Aorta (tissue), 5 donors: ENCODE measurements at regions of chr2 and their contacts with region 1.

Region 1: GRCh38 chr2:98909317-98910211 is 26.5 kb downstream of the CRACDL start:
- DNase-seq: peak in 1 of 2 donors; percentile 67
- ATAC-seq: peak; percentile 56
- H3K4me3 ChIP-seq: no peak overlapping the region
- H3K27ac ChIP-seq: peak overlapping the region in 1 of 2 donors; percentile 5
- H3K4me1 ChIP-seq: no peaks in the 10 kb centered on the region
- H3K27me3 ChIP-seq: no peaks in the 10 kb centered on the region

Region 2: DNA sequence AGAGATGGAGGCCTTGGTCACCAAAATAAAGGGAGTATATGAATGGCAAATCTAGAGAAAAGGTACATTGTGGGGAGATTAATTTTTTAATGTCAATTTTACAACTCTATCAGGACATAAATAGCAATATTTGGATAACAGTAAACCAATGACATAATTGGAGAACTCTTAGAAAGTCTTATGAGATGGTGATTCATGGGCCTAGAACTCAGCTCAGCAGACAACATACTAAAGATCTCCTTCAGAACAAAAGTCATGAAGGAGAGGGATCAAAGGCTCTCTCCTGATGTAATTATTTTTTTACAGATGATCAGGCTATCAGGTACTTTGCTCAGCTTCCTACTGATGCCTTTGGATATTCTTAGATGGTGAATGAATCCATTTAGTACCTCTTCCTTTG is 63.5 kb before region 1 on chr2:
- intact Hi-C with region 1: no loop called
- DNase-seq: no peak
- ATAC-seq: no peak
- H3K4me3 ChIP-seq: no peak overlapping the region
- H3K27ac ChIP-seq: no peak overlapping the region
- H3K4me1 ChIP-seq: no peaks in the 10 kb centered on the region
- H3K27me3 ChIP-seq: no peaks in the 10 kb centered on the region

Region 3: GRCh38 chr2:98869940-98870263 is 39.7 kb before region 1 on chr2:
- intact Hi-C with region 1: loop called in 1 of 2 experiments (anchors 10 kb)
- DNase-seq: no peak
- ATAC-seq: no peak
- H3K4me3 ChIP-seq: no peak overlapping the region
- H3K27ac ChIP-seq: no peak overlapping the region
- H3K4me1 ChIP-seq: no peaks in the 10 kb centered on the region
- H3K27me3 ChIP-seq: no peaks in the 10 kb centered on the region

Region 4: DNA sequence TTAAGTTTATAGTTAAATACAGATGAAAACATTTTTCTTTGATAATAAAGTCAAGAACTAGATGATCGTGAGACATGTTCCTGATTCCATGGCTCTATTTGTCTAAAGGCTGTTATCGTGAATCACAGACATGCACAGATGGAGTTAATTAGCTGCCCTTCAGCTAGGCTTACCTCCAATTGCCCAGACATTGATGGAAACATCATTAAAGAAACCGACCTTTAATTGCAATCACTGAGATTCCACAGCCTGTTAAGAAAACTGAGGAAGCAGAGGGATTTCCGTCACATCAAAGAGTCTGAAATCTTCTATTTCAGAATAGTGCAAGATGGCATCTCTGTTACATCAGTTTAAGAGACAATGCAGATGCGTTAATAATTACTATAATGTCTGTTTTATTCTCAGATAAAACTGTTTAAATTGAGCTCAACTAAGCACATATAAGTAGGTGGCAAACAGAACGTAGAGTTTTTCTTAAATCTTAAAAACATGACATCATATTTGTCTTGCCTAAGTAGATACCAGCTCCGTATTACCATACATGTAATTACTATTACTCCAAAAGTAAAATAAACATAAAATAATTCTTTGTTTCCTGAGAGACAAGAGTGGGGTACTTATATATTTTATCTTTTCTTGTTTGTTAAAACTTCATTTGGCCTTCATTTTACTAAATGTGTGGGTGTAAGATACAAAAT is 50.4 kb after region 1 on chr2:
- intact Hi-C with region 1: no loop called
- DNase-seq: no peak
- ATAC-seq: no peak
- H3K4me3 ChIP-seq: no peak overlapping the region
- H3K27ac ChIP-seq: no peak overlapping the region
- H3K4me1 ChIP-seq: no peaks in the 10 kb centered on the region
- H3K27me3 ChIP-seq: no peaks in the 10 kb centered on the region